Motor neuron (in vitro differentiated cells): ENCODE measurements at regions of chr1 and their contacts with region 1.

Region 1: GRCh38 chr1:212455803-212456528 is 23.2 kb downstream of the NENF start:
- ATAC-seq: peak; percentile 71 to 92 (median 87)
- H3K4me3 ChIP-seq: no peak overlapping the region
- H3K27ac ChIP-seq: no peak overlapping the region
- H3K4me1 ChIP-seq: peaks cover 9 to 15% of the 10 kb centered on the region in 2 donors

Region 2: DNA sequence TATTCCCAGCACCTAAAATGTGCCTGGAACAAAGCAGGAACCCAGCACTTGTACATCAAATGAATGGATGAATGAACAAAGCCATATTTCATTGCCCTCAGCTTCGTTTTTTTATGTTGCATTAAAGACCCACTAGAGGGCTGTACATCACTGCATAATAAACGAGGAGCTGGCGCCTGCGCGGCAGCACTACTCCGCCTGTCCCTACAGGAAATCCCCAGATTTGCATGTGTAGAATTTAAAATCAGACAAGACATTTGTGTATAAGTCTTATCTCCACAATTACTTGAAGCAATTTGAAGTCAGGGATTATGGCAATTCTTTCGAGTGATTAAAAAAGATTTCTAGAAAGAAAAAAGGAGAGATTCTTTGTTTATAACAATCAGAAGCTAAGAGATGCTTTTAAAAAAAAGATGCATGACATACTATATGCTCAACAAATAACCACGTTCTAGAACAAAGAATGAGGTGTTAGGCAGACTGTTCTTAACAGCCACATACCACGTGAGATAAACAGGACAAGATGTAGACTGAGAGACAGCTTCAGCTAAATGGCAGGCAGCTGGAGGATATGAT is 775.1 kb before region 1 on chr1:
- in situ Hi-C with region 1: loop called in 1 of 9 experiments (anchors 25 kb)
- ATAC-seq: peak; percentile 59 to 93 (median 85)
- H3K4me3 ChIP-seq: no peak overlapping the region
- H3K27ac ChIP-seq: no peak overlapping the region
- H3K4me1 ChIP-seq: peaks cover 0 to 2% of the 10 kb centered on the region in 2 donors

Region 3: GRCh38 chr1:212053993-212054392 is 402.0 kb before region 1 on chr1:
- in situ Hi-C with region 1: loop called in 2 of 9 experiments (anchors 10 kb)
- ATAC-seq: no peak
- H3K4me3 ChIP-seq: no peak overlapping the region
- H3K27ac ChIP-seq: no peak overlapping the region
- H3K4me1 ChIP-seq: no peaks in the 10 kb centered on the region

Region 4: DNA sequence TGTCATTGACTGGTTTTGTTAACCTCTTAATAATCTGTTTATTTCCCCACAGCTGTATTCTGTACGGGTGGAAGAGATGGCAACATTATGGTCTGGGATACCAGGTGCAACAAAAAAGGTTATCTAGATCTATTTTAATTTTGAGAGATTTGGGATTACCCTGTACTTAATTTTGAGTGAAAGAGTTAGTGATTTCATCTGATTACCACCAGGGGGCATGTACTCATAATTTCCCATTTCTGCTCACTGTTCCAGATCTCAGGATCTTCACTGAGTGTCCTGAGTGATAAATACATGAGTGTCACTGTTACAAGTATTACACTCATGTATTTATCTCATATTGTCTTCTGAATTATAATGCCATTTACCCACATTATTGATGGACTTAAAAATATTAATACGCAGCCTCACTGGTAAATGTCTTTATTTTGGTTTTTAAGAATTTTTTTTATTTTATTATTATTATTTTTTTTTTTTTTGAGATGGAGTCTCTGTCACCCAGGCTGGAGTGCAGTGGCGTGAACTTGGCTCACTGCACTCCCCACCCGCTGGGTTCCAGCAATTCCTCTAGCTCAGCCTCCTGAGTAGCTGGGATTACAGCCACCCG is 393.0 kb before region 1 on chr1:
- in situ Hi-C with region 1: loop called in 7 of 9 experiments (anchors 10 kb)
- ATAC-seq: peak in 7 of 8 experiments; percentile 34 to 74 (median 43)
- H3K4me3 ChIP-seq: no peak overlapping the region
- H3K27ac ChIP-seq: no peak overlapping the region
- H3K4me1 ChIP-seq: no peaks in the 10 kb centered on the region

Region 5: DNA sequence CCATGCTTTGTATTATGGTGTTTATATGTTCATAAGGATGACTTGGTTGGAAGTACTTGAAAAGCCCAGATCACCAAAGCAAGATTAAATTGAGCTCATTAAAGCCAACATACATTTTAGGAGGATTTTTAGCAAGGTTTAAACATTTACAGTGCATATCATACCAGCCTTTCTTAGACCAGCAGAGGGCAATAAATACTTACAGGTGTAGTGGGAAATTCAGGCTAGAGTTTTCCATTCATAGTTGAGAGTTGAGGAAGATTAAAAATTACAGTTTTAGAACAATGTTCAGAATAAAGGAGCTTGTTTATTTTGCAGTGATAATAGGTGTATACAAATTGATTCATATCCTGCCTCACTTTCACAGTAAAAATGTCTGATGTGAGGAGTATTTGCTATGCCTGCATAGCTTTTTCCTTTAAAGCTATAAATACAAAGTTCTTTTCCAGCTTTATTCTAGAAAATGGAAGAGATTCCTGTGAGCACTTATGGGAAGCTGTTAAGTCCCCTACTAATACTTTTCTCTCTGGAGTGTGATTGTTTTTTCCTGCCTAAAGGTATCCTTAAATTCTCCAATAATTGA is 385.2 kb before region 1 on chr1:
- in situ Hi-C with region 1: loop called in 6 of 9 experiments (anchors 10 kb)
- ATAC-seq: peak in 7 of 8 experiments; percentile 36 to 79 (median 68)
- H3K4me3 ChIP-seq: no peak overlapping the region
- H3K27ac ChIP-seq: no peak overlapping the region
- H3K4me1 ChIP-seq: no peaks in the 10 kb centered on the region

Region 6: DNA sequence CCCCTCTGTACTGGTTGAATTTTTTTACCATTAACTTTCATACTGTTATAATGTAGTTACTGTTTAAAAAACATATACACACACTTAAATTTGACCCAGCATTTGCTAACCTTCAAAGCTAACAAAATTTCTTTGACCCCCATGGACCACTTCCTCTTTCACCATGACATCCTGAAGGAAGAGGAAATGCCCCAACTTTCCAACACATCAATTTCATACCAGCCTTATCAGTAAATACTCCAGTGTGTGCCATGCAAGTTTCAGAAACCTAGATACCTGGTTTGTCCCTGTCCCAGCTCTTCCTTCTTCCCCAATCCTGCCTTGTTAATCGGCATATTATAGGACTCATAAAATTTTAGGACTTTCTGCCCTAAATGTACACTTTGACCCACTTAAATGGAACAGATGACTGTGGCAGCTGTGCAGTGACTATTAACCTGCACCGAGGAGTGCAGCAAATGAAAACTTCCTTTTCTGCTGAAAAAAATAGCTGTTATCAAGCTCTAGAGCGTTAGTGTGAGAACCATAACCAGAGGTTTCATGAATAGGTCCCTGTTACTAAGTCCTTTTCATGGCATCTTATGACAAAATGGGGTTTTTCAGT is 366.3 kb before region 1 on chr1:
- in situ Hi-C with region 1: loop called in 1 of 9 experiments (anchors 10 kb)
- ATAC-seq: no peak
- H3K4me3 ChIP-seq: no peak overlapping the region
- H3K27ac ChIP-seq: no peak overlapping the region
- H3K4me1 ChIP-seq: no peaks in the 10 kb centered on the region

Region 7: DNA sequence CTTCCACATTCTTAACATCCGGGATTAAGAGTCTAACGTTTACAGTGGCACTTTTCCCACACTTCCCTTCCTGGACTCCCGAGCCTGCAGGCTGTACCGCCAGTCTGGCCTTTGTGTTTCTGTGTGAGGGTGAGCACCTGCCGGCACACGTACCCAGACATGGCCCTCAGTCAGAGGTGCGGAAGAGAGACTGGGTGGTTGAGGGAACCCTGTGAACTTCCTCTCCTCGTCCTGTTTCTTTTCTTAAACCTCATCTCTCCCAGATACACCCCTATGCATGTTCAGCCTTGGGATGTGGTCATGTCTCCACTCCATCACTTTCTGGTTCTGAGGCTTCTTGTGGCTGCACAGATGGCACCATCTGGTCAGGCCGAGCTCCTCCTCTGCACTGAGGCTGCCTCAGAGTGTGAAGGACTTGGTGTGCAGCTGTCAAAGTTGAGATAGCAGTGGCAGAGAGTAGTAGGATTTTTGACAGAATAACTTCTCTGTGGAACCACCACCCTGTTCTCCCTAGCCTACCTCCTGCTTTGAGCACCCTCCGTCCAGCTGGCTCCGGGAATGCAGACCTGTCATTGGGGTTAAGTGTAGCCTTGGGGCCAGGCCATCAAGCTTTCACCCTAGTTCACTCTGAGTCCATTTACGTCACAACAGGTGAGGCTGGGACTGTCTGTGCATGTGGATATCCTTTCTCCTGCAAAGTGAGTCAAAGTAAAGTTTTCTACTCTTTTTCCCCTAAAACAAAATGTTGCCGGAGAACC is 525.8 kb after region 1 on chr1:
- in situ Hi-C with region 1: loop called in 1 of 9 experiments (anchors 25 kb)
- ATAC-seq: peak in 2 of 8 experiments; percentile 13 to 18
- H3K4me3 ChIP-seq: no peak overlapping the region
- H3K27ac ChIP-seq: no peak overlapping the region
- H3K4me1 ChIP-seq: peaks cover 0 to 16% of the 10 kb centered on the region in 2 donors